Activated T-helper 2 cell treated with anti-CD3 and anti-CD28 coated beads, Interferon-gamma antibody, Interleukin-2, Interleukin-4, amounts not matched to agents 10 μg/mL and 5 μg/mL and 100 μg/mL, durations not matched to agents 14 hours and 24 hours and 36 hours (primary cell): ENCODE measurements at regions of chr17 and their contacts with region 1.

Region 1: GRCh38 chr17:21214015-21214776 is at the start of gene TMEM11:
- DNase-seq: peak; percentile 94
- H3K4me3 Mint-ChIP-seq: peak within 1 kb of the TSS; percentile 94
- H3K27ac Mint-ChIP-seq: peak within 1 kb of the TSS; percentile 94
- H3K4me1 Mint-ChIP-seq: peaks cover 40% of the 10 kb centered on the region
- H3K27me3 Mint-ChIP-seq: no peaks in the 10 kb centered on the region
- total RNA-seq, gene TMEM11: 27.1 and 30.5 TPM in 2 replicates

Region 2: DNA sequence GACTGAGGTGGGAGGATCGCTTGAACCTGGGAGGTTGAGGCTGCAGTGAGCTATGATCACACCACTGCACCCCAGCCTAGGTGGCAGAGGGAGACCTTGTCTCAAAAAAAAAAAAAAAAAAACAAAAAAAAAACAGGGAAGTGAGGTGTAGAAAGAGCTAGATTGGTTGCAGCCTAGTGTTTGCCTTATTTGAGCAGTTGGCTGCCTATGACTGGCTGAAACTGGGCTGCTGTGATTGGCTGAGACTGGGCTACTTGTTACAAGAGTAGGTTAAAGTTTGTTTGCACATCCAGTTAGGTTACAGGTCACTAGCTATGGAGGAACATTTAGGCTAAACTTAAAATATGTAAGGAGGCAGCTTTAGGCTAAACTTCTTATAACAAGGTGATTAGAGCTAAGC is 81.8 kb before region 1 on chr17:
- intact Hi-C with region 1: no loop called
- DNase-seq: no peak
- H3K4me3 Mint-ChIP-seq: no peak overlapping the region
- H3K27ac Mint-ChIP-seq: no peak overlapping the region
- H3K4me1 Mint-ChIP-seq: peaks cover 9% of the 10 kb centered on the region
- H3K27me3 Mint-ChIP-seq: no peaks in the 10 kb centered on the region

Region 3: DNA sequence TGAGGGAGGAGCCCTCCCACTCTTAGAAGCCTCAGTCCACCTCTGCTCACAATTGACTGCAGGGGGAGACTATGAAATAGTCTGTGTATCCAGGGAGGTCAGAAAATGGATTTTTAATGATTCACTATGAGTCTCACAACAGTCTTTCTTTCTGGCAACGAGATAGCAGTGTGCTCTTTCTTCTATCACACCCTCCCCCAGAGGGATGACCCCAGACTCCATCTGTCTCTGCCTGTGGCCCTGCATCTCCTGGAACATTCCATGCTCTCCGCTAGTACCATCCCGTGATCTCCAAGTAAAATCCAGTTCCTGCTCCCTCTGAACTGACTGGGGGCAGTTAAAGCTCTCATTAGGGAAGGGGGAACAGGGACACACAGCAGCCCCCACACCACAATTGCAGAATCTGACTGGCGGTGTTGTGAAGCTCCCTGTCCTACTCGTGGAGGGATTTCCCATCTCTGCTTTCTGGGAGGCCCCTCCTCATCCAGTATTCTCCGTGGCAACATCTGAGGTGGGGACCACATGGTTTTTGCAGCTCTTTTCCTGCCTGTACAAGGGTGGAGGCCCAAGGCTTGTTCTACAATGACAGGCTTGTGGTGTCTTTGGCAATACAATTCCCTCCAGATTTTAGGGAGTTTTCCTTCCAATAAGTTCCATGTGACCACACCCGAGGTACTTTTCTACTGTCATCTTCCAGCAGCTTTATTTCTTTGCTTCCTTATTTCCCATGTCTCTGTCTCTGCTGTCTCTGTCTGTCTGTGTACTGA is 19.6 kb after region 1 on chr17:
- intact Hi-C with region 1: no loop called
- DNase-seq: no peak
- H3K4me3 Mint-ChIP-seq: no peak overlapping the region
- H3K27ac Mint-ChIP-seq: no peak overlapping the region
- H3K4me1 Mint-ChIP-seq: no peaks in the 10 kb centered on the region
- H3K27me3 Mint-ChIP-seq: no peaks in the 10 kb centered on the region

Region 4: DNA sequence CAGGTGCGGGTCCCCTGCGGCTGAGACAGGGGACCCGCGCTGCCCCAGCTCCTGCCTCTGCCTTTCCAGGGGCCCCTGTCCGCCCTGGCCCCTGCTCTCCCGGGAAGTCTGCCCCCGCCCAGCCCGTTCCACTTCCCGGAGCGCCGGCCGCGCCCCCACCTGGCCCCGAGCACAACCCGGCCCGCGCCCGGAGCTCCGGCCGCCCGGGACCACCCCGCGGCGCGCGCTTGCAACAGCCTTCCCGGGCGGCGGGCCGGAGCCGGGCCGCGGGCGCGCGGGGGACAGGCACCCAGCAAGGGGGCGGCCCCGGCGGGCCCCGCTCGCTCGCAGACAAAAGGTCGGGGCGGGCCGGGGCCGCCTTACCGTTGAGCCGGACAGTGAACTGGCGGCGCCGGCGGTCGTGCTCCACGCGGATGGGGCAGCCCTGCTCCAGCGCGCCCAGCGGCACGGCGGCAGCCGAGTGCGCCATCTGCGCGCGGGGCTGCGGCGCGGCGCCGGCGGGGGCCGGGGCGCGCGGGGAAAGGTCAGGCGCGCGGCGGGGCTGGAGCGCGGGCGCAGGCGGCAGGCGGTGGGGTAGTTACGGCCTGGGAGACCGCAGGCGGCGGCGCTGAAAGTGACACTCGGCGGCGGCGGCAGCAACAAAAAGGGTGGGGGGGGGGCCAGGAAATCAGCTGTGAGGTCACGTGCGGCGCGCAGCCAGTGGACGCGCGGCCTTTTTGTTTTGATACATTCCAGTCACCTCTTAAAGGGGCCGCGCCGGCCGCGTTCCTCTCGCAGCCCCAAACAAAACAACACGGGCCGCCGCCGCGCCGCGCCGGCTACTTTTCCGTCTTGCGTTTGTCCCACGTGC is 38.8 kb after region 1 on chr17 and contains the start of gene NATD1:
- intact Hi-C with region 1: loop called (anchors 5 kb)
- DNase-seq: peak; percentile 65
- H3K4me3 Mint-ChIP-seq: peak within 1 kb of the TSS; percentile 79
- H3K27ac Mint-ChIP-seq: no peak within 1 kb of the TSS
- H3K4me1 Mint-ChIP-seq: peaks cover 4% of the 10 kb centered on the region
- H3K27me3 Mint-ChIP-seq: peaks cover 12% of the 10 kb centered on the region
- total RNA-seq, gene NATD1: 1.4 and 1.6 TPM in 2 replicates

Region 5: GRCh38 chr17:21463779-21464407 is 249.7 kb after region 1 on chr17:
- intact Hi-C with region 1: no loop called
- DNase-seq: no peak
- H3K4me3 Mint-ChIP-seq: no peak overlapping the region
- H3K27ac Mint-ChIP-seq: no peak overlapping the region
- H3K4me1 Mint-ChIP-seq: peaks cover 5% of the 10 kb centered on the region
- H3K27me3 Mint-ChIP-seq: peaks cover 20% of the 10 kb centered on the region